Panc1 (cell line): ENCODE measurements at regions of chr10 and their contacts with region 1.

Region 1: DNA sequence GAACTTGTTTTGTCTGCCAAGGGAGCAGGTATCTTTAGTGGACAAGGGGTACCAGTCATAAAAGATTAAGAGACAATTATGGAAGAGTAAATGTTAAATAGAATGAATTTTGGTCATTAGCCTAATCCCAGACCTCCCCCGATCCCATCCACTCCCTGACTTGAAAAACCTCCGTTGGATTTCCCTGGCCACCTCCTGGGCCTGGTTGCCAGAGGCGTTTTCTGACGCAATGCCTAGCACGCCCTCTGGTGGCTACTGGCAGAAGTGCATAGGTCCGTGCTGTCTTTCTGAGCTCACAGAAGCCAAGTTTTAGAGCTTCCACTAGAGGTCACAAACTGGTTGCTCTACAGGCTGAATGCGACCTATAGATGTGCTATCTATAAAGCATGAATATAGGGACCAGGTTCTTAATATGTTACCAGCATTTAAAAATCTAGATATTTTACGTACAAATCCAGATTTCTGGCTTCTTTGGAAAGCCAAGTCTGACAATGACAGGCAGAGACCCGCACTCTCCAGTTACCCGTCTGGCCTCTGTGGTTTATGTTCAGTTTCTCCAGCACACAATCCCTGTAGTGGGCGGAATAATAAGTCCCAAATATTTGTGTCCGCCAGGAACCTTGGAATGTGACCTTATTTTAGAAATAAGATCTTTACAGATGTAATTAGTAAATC is 39.8 kb downstream of the SPOCK2 start:
- DNase-seq: peak; percentile 96
- ATAC-seq: peak; percentile 91
- H3K4me3 ChIP-seq: no peak overlapping the region
- H3K27ac ChIP-seq: peak overlapping the region; percentile 73
- H3K4me1 ChIP-seq: peaks cover 11% of the 10 kb centered on the region
- H3K27me3 ChIP-seq: no peaks in the 10 kb centered on the region
- CTCF ChIP-seq: peak; percentile 100

Region 2: GRCh38 chr10:71893920-71894319 is 154.7 kb before region 1 on chr10:
- CTCF ChIA-PET with region 1: interaction called, 17 read pairs
- POLR2A ChIA-PET with region 1: interaction called, 4 read pairs
- in situ Hi-C with region 1: no loop called
- intact Hi-C with region 1: loop called (anchors 2 kb)
- DNase-seq: no peak
- ATAC-seq: no peak
- H3K4me3 ChIP-seq: no peak overlapping the region
- H3K27ac ChIP-seq: peak overlapping the region; percentile 49
- H3K4me1 ChIP-seq: peaks cover 43% of the 10 kb centered on the region
- H3K27me3 ChIP-seq: no peaks in the 10 kb centered on the region
- CTCF ChIP-seq: no peak

Region 3: GRCh38 chr10:71995887-71996575 is 52.6 kb before region 1 on chr10:
- CTCF ChIA-PET with region 1: interaction called, 6 read pairs
- POLR2A ChIA-PET with region 1: interaction called, 12 read pairs
- in situ Hi-C with region 1: no loop called
- intact Hi-C with region 1: no loop called
- DNase-seq: no peak
- ATAC-seq: no peak
- H3K4me3 ChIP-seq: no peak overlapping the region
- H3K27ac ChIP-seq: no peak overlapping the region; the same call in 1 of the 2 replicates
- H3K4me1 ChIP-seq: peaks cover 56% of the 10 kb centered on the region
- H3K27me3 ChIP-seq: no peaks in the 10 kb centered on the region
- CTCF ChIP-seq: no peak

Region 4: GRCh38 chr10:72069751-72070526 is 21.4 kb after region 1 on chr10:
- CTCF ChIA-PET with region 1: interaction called, 15 read pairs
- POLR2A ChIA-PET with region 1: no interaction called
- in situ Hi-C with region 1: no loop called
- intact Hi-C with region 1: no loop called
- DNase-seq: no peak
- ATAC-seq: no peak
- H3K4me3 ChIP-seq: no peak overlapping the region
- H3K27ac ChIP-seq: peak overlapping the region; percentile 60
- H3K4me1 ChIP-seq: peaks cover 50% of the 10 kb centered on the region
- H3K27me3 ChIP-seq: no peaks in the 10 kb centered on the region
- CTCF ChIP-seq: no peak

Region 5: DNA sequence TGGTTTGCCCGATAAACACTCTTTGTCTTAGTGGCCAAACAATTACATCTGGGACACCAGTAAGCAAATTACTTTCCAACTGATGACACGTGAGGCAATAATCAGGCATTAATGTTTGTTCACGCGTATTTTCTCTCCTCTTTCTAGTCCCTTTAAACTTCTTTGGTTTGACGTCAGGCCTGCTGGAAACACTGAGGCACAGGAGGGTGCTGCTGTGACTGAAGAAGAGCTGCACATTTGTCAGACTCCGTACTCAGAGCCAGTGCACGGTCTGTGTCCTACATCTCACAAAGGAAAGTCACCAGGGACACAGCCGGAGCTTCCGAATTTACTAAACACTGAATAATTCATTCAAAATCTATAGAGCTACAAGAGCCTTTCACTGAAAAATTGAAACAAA is 109.6 kb after region 1 on chr10:
- CTCF ChIA-PET with region 1: no interaction called
- POLR2A ChIA-PET with region 1: no interaction called
- in situ Hi-C with region 1: no loop called
- intact Hi-C with region 1: no loop called
- DNase-seq: no peak
- ATAC-seq: no peak
- H3K4me3 ChIP-seq: no peak overlapping the region
- H3K27ac ChIP-seq: peak overlapping the region; percentile 74; the same call in 1 of the 2 replicates
- H3K4me1 ChIP-seq: peaks cover 8% of the 10 kb centered on the region
- H3K27me3 ChIP-seq: no peaks in the 10 kb centered on the region
- CTCF ChIP-seq: no peak

Region 6: GRCh38 chr10:72223743-72224101 is 175.1 kb after region 1 on chr10:
- CTCF ChIA-PET with region 1: interaction called, 3 read pairs
- POLR2A ChIA-PET with region 1: no interaction called
- in situ Hi-C with region 1: no loop called
- intact Hi-C with region 1: loop called (anchors 2 kb)
- DNase-seq: no peak
- ATAC-seq: no peak
- H3K4me3 ChIP-seq: no peak overlapping the region
- H3K27ac ChIP-seq: peak overlapping the region; percentile 84
- H3K4me1 ChIP-seq: peaks cover 22% of the 10 kb centered on the region
- H3K27me3 ChIP-seq: no peaks in the 10 kb centered on the region
- CTCF ChIP-seq: no peak